Vagina (tissue), 2 donors: ENCODE measurements at regions of chr4 and their contacts with region 1.

Region 1: GRCh38 chr4:76949276-76950051 is at the start of gene SEPTIN11:
- DNase-seq: peak in 1 of 2 donors; percentile 92
- H3K4me3 ChIP-seq: peak within 1 kb of the TSS; percentile 73 to 76
- H3K27ac ChIP-seq: peak within 1 kb of the TSS; percentile 85
- H3K4me1 ChIP-seq: peaks cover 38% of the 10 kb centered on the region
- H3K27me3 ChIP-seq: no peaks in the 10 kb centered on the region
- CTCF ChIP-seq: peak in 1 of 3 experiments; percentile 23
- POLR2A ChIP-seq: peak in 1 of 2 donors; percentile 95
- total RNA-seq, gene SEPTIN11: 111 TPM

Region 2: GRCh38 chr4:76984127-76984526 is 34.7 kb after region 1 on chr4:
- intact Hi-C with region 1: loop called (anchors 2 kb)
- DNase-seq: no peak
- H3K4me3 ChIP-seq: no peak overlapping the region
- H3K27ac ChIP-seq: peak overlapping the region; percentile 42
- H3K4me1 ChIP-seq: peaks cover 58% of the 10 kb centered on the region
- H3K27me3 ChIP-seq: no peaks in the 10 kb centered on the region
- CTCF ChIP-seq: no peak
- POLR2A ChIP-seq: no peak

Region 3: GRCh38 chr4:77044461-77045150 is 95.1 kb after region 1 on chr4:
- intact Hi-C with region 1: loop called (anchors 10 kb)
- DNase-seq: no peak
- H3K4me3 ChIP-seq: no peak overlapping the region
- H3K27ac ChIP-seq: no peak overlapping the region
- H3K4me1 ChIP-seq: no peaks in the 10 kb centered on the region
- H3K27me3 ChIP-seq: no peaks in the 10 kb centered on the region
- CTCF ChIP-seq: peak in 2 of 3 experiments; percentile 19 to 54
- POLR2A ChIP-seq: no peak